Activated CD4-positive, alpha-beta T cell treated with anti-CD3 and anti-CD28 coated beads for 36 hours (primary cell): ENCODE measurements at regions of chr15 and their contacts with region 1.

Region 1: DNA sequence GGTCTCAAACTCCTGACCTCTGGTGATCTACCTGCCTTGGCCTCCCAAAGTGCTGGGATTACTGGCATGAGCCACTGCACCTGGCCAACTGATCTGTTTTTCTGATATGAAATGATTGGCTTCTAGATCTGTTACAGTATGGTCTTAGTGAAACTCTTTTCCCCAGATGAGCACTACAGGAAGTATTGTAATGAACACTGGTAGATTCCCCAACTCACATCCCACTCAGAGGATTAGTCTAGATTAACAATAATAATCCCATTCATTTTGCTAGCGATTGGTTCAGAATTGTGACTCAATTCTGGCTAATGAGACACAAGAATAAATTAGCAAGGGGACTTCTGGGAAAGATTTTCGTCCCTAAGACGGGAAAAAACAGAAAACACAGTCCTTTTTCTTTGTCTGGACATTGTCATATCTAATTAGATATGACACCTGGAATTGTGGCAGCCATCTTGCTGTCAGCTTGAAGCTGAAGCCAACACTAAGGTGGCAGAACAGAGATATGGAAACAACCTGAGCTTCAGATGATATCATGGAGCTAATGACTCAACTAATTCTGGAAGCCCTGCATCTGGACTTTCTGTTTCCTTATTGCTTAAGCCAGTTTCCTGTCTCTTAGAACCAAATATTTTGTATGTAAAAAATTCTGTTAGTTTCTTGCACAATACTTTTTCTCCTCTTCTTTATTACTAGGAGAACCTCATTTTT is 17.4 kb upstream of the NPTN start:
- DNase-seq: peak; percentile 36
- ATAC-seq: peak; percentile 87
- H3K4me3 Mint-ChIP-seq: peak overlapping the region; percentile 10
- H3K27ac Mint-ChIP-seq: peak overlapping the region; percentile 69
- H3K4me1 Mint-ChIP-seq: peaks cover 18% of the 10 kb centered on the region
- H3K27me3 Mint-ChIP-seq: peaks cover 10% of the 10 kb centered on the region

Region 2: DNA sequence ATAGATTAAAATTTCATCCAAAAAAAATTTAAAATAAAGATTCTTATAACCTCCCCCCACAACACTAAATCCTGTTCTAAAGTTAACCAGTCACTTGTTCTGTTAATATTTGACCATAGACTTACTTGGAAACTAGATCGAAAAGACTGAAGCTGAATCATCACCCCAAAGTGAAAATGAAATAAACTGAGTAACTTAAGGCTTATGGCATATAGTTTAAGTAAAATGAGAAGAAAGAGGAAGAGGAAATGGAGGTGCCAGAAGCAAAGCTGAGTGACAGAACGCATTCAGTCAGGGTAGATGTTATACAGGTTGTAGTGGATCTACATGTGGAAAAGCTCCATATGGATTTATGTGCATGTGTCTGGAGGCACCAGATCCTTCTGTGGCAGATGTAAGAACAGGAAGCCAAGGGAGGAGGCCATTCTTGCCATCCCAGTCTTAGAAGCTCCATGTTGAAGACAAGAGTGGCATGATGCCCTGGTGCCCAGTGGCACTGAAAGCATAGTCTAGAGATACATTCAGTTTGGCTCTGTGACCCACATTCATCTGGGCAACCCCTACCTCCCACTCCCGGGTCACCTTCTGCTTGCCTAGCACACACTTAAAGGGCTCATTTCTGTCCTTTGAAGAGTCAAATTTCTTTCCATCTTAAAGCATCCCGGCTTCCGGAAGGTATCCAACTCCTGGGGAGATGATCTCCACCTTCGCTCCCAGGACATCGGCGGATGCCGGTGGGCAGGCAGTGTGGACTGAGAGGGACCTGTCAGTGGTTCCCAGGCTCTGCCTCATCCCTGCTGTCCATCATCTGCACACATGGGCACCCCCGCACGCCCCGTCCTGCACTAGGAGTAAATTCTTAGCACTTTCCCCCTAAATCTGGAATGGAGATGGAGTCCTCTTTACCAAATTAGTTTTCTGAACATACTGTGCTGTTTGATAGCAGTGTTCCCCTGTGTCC is 507.5 kb before region 1 on chr15:
- CTCF ChIA-PET with region 1: no interaction called
- POLR2A ChIA-PET with region 1: no interaction called
- intact Hi-C with region 1: loop called in 1 of 2 experiments (anchors 2 kb)
- DNase-seq: peak; percentile 12
- ATAC-seq: peak; percentile 81
- H3K4me3 Mint-ChIP-seq: no peak overlapping the region
- H3K27ac Mint-ChIP-seq: peak overlapping the region; percentile 87
- H3K4me1 Mint-ChIP-seq: peaks cover 43% of the 10 kb centered on the region
- H3K27me3 Mint-ChIP-seq: no peaks in the 10 kb centered on the region

Region 3: GRCh38 chr15:73639464-73640188 is 10.9 kb before region 1 on chr15:
- CTCF ChIA-PET with region 1: interaction called, 32 read pairs
- POLR2A ChIA-PET with region 1: interaction called, 10 read pairs
- intact Hi-C with region 1: loop called (anchors 1 to 2 kb)
- DNase-seq: no peak
- ATAC-seq: no peak
- H3K4me3 Mint-ChIP-seq: no peak overlapping the region
- H3K27ac Mint-ChIP-seq: no peak overlapping the region
- H3K4me1 Mint-ChIP-seq: peaks cover 8% of the 10 kb centered on the region
- H3K27me3 Mint-ChIP-seq: peaks cover 26% of the 10 kb centered on the region

Region 4: GRCh38 chr15:73683777-73684580 is 33.4 kb after region 1 on chr15 and contains the start of gene CD276:
- CTCF ChIA-PET with region 1: no interaction called
- POLR2A ChIA-PET with region 1: interaction called, 3 read pairs
- intact Hi-C with region 1: loop called in 1 of 2 experiments (anchors 2 kb)
- DNase-seq: peak; percentile 41
- ATAC-seq: peak; percentile 59
- H3K4me3 Mint-ChIP-seq: peak within 1 kb of the TSS; percentile 59
- H3K27ac Mint-ChIP-seq: peak within 1 kb of the TSS; percentile 32
- H3K4me1 Mint-ChIP-seq: peaks cover 33% of the 10 kb centered on the region
- H3K27me3 Mint-ChIP-seq: peaks cover 58% of the 10 kb centered on the region
- total RNA-seq, gene CD276: 2.6 to 3.0 TPM

Region 5: DNA sequence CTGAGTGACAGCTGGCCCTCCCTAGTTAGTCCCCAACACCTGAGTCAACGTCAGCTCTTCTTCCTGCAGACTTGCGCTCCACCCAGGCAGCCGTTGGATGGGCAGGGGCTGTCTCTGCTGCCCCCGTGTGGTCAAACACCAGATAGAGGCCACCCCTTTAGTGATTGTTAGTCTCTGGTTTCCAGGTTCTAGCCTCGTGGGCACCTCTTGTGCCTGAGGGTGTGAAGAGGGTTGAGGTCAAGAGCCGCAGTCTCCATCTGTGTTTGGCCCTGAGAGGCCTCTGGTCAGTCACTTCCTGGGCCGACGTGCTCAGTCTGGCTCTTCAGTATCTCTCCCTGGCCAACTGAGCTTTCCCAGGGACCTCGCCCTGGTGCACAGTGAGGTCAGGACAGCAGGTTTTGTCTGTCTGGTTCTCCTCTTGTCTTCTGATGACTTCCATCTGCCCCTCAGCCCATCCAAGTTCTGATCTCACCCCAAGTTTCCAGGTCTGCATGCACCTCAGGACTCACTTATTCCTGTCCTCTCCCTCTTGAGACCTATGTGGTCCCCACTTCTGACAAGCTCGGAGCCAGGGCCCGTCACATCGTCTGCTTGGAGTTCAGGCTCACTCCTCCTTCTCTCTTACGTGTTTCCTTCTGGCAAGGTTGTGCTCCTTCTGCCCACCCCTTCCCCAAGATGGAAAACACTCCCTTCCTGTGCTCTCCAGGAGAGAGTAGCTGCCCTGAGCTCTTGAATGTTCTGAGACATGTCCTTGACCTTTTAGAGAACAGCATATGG is 54.5 kb after region 1 on chr15:
- CTCF ChIA-PET with region 1: interaction called, 10 read pairs
- POLR2A ChIA-PET with region 1: no interaction called
- intact Hi-C with region 1: no loop called
- DNase-seq: peak; percentile 83
- ATAC-seq: peak; percentile 85
- H3K4me3 Mint-ChIP-seq: no peak overlapping the region
- H3K27ac Mint-ChIP-seq: no peak overlapping the region
- H3K4me1 Mint-ChIP-seq: no peaks in the 10 kb centered on the region
- H3K27me3 Mint-ChIP-seq: peaks cover 3% of the 10 kb centered on the region